ENCODE measurements at regions of chrX and their contacts with region 1.

Region 1: DNA sequence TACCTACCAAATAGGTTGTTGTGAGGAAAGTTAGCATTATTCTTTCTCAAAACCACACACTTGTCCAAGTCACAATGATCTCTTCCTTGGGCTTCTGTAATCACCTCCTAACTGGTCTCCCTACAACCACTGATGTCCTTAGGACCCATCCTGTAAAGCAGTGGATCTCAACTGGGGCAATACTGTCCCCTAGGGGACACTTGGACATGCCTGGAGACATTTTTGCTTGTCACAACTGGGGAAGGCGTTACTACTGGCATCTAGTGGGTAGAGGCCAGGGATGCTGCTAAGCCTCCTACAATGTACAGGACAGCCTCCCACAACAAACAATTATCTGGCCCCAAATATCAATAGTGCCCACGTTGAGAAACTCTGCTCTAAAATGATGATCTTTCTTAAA is 118.7 kb upstream of the AP1S2 start:
- DNase-seq: peak; percentile 36
- H3K4me3 ChIP-seq: no peak overlapping the region
- H3K27ac ChIP-seq: no peak overlapping the region
- H3K4me1 ChIP-seq: no peaks in the 10 kb centered on the region
- H3K27me3 ChIP-seq: no peaks in the 10 kb centered on the region
- CTCF ChIP-seq: peak; percentile 26 to 41
- POLR2A ChIP-seq: no peak

Region 2: DNA sequence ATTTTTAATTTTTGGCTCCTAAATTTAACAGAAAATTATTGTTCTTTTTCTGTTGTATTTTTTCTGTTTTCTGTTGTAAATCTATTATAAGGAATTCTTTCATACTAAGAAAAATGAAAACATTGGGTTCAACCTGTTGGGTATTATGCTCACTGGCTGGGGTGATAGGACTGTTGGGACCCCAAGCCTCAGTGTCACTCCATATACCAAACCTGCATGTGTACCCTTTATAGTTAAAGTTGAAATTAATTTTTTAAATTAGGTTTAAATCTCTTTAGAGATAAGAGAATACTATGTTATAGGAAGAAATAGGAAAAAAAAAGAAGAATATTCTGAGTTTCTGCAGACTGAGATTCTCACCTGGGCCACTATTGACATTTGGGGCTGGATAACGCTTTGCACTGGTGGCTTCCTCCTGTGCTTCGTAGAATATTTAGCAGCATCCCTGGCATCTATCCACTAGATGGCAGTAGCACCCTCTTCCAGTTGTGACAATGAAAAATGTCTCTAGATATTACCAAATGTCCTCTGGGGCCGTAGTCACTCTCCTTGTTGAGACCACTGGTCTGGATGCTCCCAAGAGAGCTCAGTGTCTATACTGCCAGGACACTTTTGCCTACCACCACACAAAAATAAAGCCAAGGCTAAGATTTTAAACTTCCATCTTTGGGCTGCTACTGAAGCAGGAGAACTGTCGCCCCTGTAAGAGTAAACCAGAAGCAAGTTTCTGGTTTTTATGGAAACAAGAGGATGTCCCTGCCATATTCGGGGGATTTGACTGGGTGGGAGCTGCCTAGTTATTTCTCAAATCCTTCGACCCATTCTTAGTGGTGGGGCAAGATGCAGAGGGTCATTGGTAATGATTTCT is 286.2 kb before region 1 on chrX:
- CTCF ChIA-PET with region 1: no interaction called
- POLR2A ChIA-PET with region 1: no interaction called
- dilution Hi-C with region 1: no loop called
- intact Hi-C with region 1: loop called (anchors 2 kb)
- DNase-seq: peak; percentile 56
- H3K4me3 ChIP-seq: no peak overlapping the region
- H3K27ac ChIP-seq: no peak overlapping the region
- H3K4me1 ChIP-seq: no peaks in the 10 kb centered on the region
- H3K27me3 ChIP-seq: no peaks in the 10 kb centered on the region
- CTCF ChIP-seq: peak; percentile 47 to 55
- POLR2A ChIP-seq: no peak

Region 3: GRCh38 chrX:15761564-15762191 is 211.6 kb before region 1 on chrX:
- CTCF ChIA-PET with region 1: no interaction called
- POLR2A ChIA-PET with region 1: no interaction called
- dilution Hi-C with region 1: no loop called
- intact Hi-C with region 1: loop called (anchors 1 kb)
- DNase-seq: peak; percentile 20
- H3K4me3 ChIP-seq: no peak overlapping the region
- H3K27ac ChIP-seq: no peak overlapping the region
- H3K4me1 ChIP-seq: no peaks in the 10 kb centered on the region
- H3K27me3 ChIP-seq: no peaks in the 10 kb centered on the region
- CTCF ChIP-seq: peak; percentile 36 to 69
- POLR2A ChIP-seq: no peak

Region 4: GRCh38 chrX:15815779-15816437 is 157.4 kb before region 1 on chrX:
- CTCF ChIA-PET with region 1: no interaction called
- POLR2A ChIA-PET with region 1: no interaction called
- dilution Hi-C with region 1: no loop called
- intact Hi-C with region 1: loop called (anchors 1 kb)
- DNase-seq: peak; percentile 2
- H3K4me3 ChIP-seq: no peak overlapping the region
- H3K27ac ChIP-seq: no peak overlapping the region
- H3K4me1 ChIP-seq: no peaks in the 10 kb centered on the region
- H3K27me3 ChIP-seq: no peaks in the 10 kb centered on the region
- CTCF ChIP-seq: peak; percentile 9 to 11
- POLR2A ChIP-seq: no peak

Region 5: DNA sequence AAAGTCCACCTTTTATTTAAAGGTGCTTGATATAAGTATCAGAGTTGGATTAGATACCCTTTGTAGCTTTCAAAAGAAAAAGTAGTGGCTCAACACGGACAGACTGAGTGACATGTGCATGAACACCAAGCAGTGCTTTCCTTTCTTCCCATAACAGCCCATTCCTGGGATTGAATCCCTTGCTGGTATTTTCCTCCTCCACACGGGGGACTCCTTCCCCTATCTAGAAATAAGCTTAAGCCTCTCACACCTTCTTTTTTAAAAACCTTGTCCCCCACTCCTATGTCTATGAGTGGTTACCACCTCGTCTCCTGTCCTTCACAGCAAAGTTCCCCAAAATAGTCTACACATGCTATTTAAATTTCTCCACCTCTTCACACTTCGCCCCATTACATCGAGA is 123.7 kb before region 1 on chrX:
- CTCF ChIA-PET with region 1: interaction called, 11 read pairs
- POLR2A ChIA-PET with region 1: no interaction called
- dilution Hi-C with region 1: no loop called
- intact Hi-C with region 1: loop called (anchors 5 kb)
- DNase-seq: peak; percentile 29
- H3K4me3 ChIP-seq: no peak overlapping the region
- H3K27ac ChIP-seq: no peak overlapping the region
- H3K4me1 ChIP-seq: peaks cover 5% of the 10 kb centered on the region
- H3K27me3 ChIP-seq: no peaks in the 10 kb centered on the region
- CTCF ChIP-seq: peak in 1 of 2 donors; percentile 28
- POLR2A ChIP-seq: no peak

Region 6: DNA sequence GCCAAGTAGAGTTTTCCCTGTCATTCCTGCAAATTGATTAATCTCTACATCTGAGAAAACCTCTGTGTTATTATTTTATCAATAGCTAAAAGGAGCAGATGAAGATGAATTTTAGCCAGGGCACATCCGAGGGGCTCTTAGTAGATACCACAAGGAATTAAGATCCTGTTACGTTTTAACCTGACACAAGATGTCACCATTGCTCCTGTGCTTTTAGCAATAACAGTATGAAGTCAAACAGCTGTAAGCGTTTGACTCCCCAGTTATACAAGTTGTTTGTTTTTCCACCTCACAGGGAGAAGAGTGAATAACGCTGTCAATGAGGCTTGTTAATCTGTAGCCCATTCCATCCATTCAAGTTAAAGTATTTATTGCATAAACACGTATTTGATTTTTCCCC is 42.7 kb before region 1 on chrX:
- CTCF ChIA-PET with region 1: interaction called, 13 read pairs
- POLR2A ChIA-PET with region 1: no interaction called
- dilution Hi-C with region 1: no loop called
- intact Hi-C with region 1: no loop called
- DNase-seq: peak; percentile 36
- H3K4me3 ChIP-seq: no peak overlapping the region
- H3K27ac ChIP-seq: no peak overlapping the region
- H3K4me1 ChIP-seq: no peaks in the 10 kb centered on the region
- H3K27me3 ChIP-seq: peaks cover 0 to 3% of the 10 kb centered on the region in 2 experiments
- CTCF ChIP-seq: peak in 1 of 2 donors; percentile 4
- POLR2A ChIP-seq: no peak